GM18951 (cell line): ENCODE measurements at regions of chr3 and their contacts with region 1.

Region 1: GRCh38 chr3:39383045-39383880 is at the start of gene SLC25A38:
- POLR2A ChIP-seq: peak; percentile 80

Region 2: GRCh38 chr3:39180546-39181346 is 202.5 kb before region 1 on chr3:
- in situ Hi-C with region 1: loop called (anchors 25 kb)
- POLR2A ChIP-seq: no peak

Region 3: DNA sequence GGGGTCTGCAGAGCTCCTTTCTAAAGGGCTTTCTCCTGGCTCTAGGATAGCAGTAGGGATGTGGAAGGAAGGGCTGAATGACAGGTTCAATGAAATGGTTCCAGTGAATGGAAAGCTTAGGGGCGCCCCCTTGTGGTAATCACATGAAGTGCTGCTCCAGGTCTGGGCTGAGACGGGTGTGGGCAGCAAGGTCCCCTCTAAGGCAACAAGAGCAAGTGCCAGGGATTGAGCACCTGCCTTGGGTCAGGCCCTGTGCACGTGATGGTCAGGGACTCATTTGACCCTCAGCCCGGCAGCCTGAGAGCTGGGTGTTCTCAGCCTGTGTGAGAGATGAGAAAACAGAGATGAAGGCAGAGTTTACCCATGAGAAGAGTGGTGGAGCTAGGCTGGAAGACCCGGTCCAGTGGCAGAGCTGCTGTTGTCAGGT is 91.3 kb before region 1 on chr3:
- in situ Hi-C with region 1: loop called (anchors 10 kb)
- POLR2A ChIP-seq: no peak

Region 4: DNA sequence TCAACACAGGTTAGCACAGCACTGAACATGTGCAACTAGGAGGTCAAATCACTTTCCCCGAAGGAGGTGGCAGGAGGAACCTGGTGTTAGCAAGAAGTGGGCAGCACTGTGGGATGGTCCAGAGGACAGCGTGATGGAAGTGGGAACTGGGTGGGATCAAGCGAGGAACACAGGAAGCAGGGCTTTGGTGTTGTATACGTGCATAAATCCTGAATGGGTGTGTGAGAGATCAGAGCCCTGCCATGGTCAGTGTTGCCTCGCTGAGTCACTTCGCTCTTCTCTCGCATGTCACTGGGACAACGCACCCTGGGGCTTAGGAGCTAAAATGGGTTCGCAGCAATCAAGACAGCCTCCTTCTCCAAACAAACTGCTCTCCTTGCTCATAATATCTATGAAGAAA is 146.3 kb after region 1 on chr3:
- in situ Hi-C with region 1: no loop called
- POLR2A ChIP-seq: no peak

Region 5: GRCh38 chr3:39548282-39548681 is 165.0 kb after region 1 on chr3:
- in situ Hi-C with region 1: no loop called
- POLR2A ChIP-seq: no peak